ENCODE measurements at regions of chr11 and their contacts with region 1.

Region 1: GRCh38 chr11:57530596-57531507 is at the start of gene TIMM10:
- DNase-seq: peak; percentile 97
- ATAC-seq: peak; percentile 97
- H3K4me3 Mint-ChIP-seq: peak within 1 kb of the TSS; percentile 82
- H3K27ac Mint-ChIP-seq: peak within 1 kb of the TSS; percentile 88
- H3K4me1 Mint-ChIP-seq: peaks cover 47% of the 10 kb centered on the region
- H3K27me3 Mint-ChIP-seq: no peaks in the 10 kb centered on the region
- total RNA-seq, gene TIMM10: 65.4 to 65.8 TPM

Region 2: GRCh38 chr11:57345555-57346211 is 185.2 kb before region 1 on chr11:
- CTCF ChIA-PET with region 1: interaction called, 16 read pairs
- POLR2A ChIA-PET with region 1: no interaction called
- DNase-seq: peak; percentile 76
- ATAC-seq: peak; percentile 62
- H3K4me3 Mint-ChIP-seq: no peak overlapping the region
- H3K27ac Mint-ChIP-seq: no peak overlapping the region
- H3K4me1 Mint-ChIP-seq: peaks cover 3% of the 10 kb centered on the region
- H3K27me3 Mint-ChIP-seq: peaks cover under 1% of the 10 kb centered on the region

Region 3: GRCh38 chr11:57359896-57360690 is 170.8 kb before region 1 on chr11:
- CTCF ChIA-PET with region 1: no interaction called
- POLR2A ChIA-PET with region 1: no interaction called
- DNase-seq: no peak
- ATAC-seq: no peak
- H3K4me3 Mint-ChIP-seq: no peak overlapping the region
- H3K27ac Mint-ChIP-seq: no peak overlapping the region
- H3K4me1 Mint-ChIP-seq: no peaks in the 10 kb centered on the region
- H3K27me3 Mint-ChIP-seq: peaks cover 13% of the 10 kb centered on the region

Region 4: DNA sequence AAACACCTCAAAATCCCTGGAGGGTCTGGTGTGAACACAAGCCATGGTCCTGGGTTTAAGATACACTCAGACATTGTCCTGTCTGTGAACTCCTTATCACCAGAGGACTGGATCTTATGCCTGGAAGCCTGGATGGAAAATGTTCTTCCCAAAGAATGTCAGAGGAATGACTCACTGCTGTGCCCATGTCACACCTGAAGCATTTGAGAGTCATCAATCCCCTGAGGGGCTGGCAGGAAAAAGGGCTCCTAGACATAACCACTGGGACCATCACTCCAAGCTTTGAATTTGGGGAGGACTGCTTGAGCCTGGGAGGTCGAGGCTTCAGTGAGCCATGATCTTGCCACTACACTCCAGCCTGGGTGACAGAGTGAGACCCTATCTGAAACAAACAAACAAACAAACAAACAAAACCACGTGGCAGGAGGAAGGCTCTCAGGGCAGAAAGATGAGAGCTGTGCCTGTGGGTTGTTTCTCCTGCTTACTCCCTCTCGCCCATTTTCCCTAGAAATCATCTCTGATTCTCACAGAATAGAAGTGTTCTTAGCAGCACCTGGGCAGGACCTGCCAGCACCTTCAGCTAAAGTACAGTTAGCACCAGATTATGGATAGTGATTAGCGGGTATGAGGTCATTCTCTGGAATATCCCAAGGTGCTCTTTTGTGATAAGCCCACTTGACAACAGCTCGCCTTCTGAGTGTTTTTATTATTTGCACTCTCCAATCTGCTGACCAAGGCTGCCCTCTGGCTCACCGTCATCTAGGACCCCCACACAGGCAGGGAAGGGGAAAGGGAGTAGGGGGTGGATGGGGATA is 128.5 kb before region 1 on chr11:
- CTCF ChIA-PET with region 1: no interaction called
- POLR2A ChIA-PET with region 1: no interaction called
- DNase-seq: no peak
- ATAC-seq: no peak
- H3K4me3 Mint-ChIP-seq: no peak overlapping the region
- H3K27ac Mint-ChIP-seq: no peak overlapping the region
- H3K4me1 Mint-ChIP-seq: peaks cover 17% of the 10 kb centered on the region
- H3K27me3 Mint-ChIP-seq: no peaks in the 10 kb centered on the region

Region 5: DNA sequence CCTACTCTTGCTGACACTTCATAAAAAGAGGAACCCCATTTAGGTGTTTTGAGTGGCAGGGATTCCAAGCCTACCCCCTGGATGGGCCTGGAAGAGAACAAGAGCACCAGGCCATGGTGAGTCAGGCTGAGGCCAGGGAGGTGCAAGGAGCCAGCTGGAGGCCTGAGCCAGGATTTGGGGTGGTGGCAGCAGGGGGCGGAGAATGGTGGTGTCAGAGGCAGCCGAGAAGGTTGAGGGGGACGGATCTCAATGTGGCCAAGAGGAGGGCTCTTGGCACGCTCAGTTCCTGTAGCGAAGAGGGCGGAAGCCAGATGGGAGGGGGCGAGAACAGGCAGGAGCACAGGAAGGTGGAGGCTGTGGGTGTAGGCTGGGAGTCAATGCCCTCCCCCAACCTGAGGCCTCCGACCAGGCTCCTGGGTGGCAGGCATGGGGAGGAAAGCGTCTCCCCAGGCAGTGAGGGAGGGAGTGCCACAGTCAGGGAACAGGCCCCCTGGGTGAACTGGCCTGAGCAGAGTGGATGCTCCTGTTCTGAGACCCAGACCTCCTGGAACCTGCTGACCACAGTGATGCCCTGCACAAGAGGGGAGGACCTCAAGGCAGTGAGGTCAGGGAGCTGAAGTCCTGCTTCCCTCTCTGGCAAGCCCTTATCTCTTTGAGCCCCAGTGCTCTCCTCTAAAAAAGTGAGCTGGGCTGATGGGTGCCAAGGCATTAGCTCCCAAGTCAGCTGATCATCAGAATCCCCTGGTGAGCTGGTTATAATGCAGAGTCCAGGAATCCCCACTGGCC is 56.6 kb before region 1 on chr11:
- CTCF ChIA-PET with region 1: interaction called, 36 read pairs
- POLR2A ChIA-PET with region 1: no interaction called
- DNase-seq: peak; percentile 87
- ATAC-seq: peak; percentile 85
- H3K4me3 Mint-ChIP-seq: peak overlapping the region; percentile 28
- H3K27ac Mint-ChIP-seq: peak overlapping the region; percentile 89
- H3K4me1 Mint-ChIP-seq: peaks cover 41% of the 10 kb centered on the region
- H3K27me3 Mint-ChIP-seq: peaks cover 14% of the 10 kb centered on the region

Region 6: GRCh38 chr11:57499413-57499982 is 31.4 kb before region 1 on chr11:
- CTCF ChIA-PET with region 1: interaction called, 484 read pairs
- POLR2A ChIA-PET with region 1: interaction called, 5 read pairs
- DNase-seq: peak; percentile 36
- ATAC-seq: peak; percentile 81
- H3K4me3 Mint-ChIP-seq: no peak overlapping the region
- H3K27ac Mint-ChIP-seq: no peak overlapping the region
- H3K4me1 Mint-ChIP-seq: no peaks in the 10 kb centered on the region
- H3K27me3 Mint-ChIP-seq: no peaks in the 10 kb centered on the region

Region 7: GRCh38 chr11:57515332-57516060 is 15.4 kb before region 1 on chr11 and contains the start of gene SLC43A1:
- CTCF ChIA-PET with region 1: interaction called, 130 read pairs
- POLR2A ChIA-PET with region 1: interaction called, 47 read pairs
- DNase-seq: peak; percentile 45
- ATAC-seq: peak; percentile 47
- H3K4me3 Mint-ChIP-seq: peak within 1 kb of the TSS; percentile 97
- H3K27ac Mint-ChIP-seq: peak within 1 kb of the TSS; percentile 91
- H3K4me1 Mint-ChIP-seq: peaks cover 32% of the 10 kb centered on the region
- H3K27me3 Mint-ChIP-seq: no peaks in the 10 kb centered on the region
- total RNA-seq, gene SLC43A1: 26.4 to 28.4 TPM